Pancreas (tissue), 10 donors: ENCODE measurements at regions of chr10 and their contacts with region 1.

Region 1: GRCh38 chr10:99248824-99249223 is 13.2 kb upstream of the HPSE2 start:
- DNase-seq: no peak
- ATAC-seq: no peak
- H3K4me3 ChIP-seq: no peak overlapping the region
- H3K27ac ChIP-seq: no peak overlapping the region
- H3K4me1 ChIP-seq: no peaks in the 10 kb centered on the region
- H3K27me3 ChIP-seq: no peaks in the 10 kb centered on the region
- CTCF ChIP-seq: no peak

Region 2: GRCh38 chr10:98460837-98461499 is 787.9 kb before region 1 on chr10:
- intact Hi-C with region 1: loop called in 2 of 3 experiments (anchors 5 to 10 kb)
- DNase-seq: peak in 4 of 6 donors; percentile 72 to 87 (median 80)
- ATAC-seq: peak; percentile 96 to 99 (median 98)
- H3K4me3 ChIP-seq: no peak overlapping the region
- H3K27ac ChIP-seq: peak overlapping the region; percentile 53 to 77 (median 66)
- H3K4me1 ChIP-seq: peaks cover 12 to 15% (median 13%) of the 10 kb centered on the region in 3 donors
- H3K27me3 ChIP-seq: no peaks in the 10 kb centered on the region
- CTCF ChIP-seq: no peak

Region 3: GRCh38 chr10:98467506-98468346 is 781.1 kb before region 1 on chr10:
- intact Hi-C with region 1: loop called in 2 of 3 experiments (anchors 5 to 10 kb)
- DNase-seq: peak; percentile 71 to 91 (median 78)
- ATAC-seq: peak; percentile 99 to 100 (median 100)
- H3K4me3 ChIP-seq: peak overlapping the region; percentile 43 to 71 (median 62)
- H3K27ac ChIP-seq: peak overlapping the region in 1 of 4 donors; percentile 21
- H3K4me1 ChIP-seq: no peaks in the 10 kb centered on the region
- H3K27me3 ChIP-seq: no peaks in the 10 kb centered on the region
- CTCF ChIP-seq: peak; percentile 63 to 71 (median 70)

Region 4: GRCh38 chr10:99303899-99304861 is 55.4 kb after region 1 on chr10:
- intact Hi-C with region 1: no loop called
- DNase-seq: peak in 4 of 6 donors; percentile 25 to 43 (median 37)
- ATAC-seq: peak in 3 of 4 donors; percentile 46 to 75 (median 70)
- H3K4me3 ChIP-seq: no peak overlapping the region
- H3K27ac ChIP-seq: no peak overlapping the region
- H3K4me1 ChIP-seq: peaks cover 0 to 11% (median 0%) of the 10 kb centered on the region in 3 donors
- H3K27me3 ChIP-seq: no peaks in the 10 kb centered on the region
- CTCF ChIP-seq: no peak